GM12878 (cell line): ENCODE measurements at regions of chr2 and their contacts with region 1.

Region 1: DNA sequence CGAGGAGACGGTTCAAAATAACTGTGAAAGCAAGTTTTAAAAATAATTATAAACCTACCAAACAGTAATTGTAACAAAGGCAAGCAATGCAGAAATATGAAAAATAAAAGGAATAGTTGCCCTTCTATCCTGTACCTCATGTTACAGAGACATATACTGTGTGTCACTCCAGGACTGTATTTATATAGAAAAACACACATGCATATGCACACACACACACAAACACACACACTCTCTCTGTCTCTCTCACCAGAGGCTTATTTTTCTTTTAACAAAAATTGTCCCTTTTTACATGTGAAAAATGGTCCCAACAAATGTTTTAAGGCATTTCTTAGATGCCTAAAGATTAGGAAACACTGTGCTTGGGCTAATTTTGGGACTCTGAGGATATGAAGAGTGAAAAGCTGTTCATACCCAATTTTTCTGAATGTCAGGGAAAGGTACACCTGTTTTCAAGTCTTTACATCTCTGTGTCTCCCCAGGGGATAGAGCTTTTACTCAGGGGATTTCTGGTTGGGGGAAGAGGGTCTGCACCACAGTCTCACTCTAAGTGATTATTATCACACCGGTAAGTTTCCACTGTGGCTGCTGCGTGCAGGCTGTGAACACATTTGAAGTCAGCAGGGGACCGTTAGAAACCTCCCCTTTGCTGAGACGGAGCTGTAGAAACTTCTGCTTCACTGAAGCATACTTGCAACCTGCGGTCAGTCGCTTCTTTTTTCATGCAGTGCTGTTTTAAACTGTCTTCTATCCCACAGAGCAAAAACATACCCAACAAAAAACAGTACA is 51.4 kb upstream of the SPAG16 start:
- DNase-seq: peak; percentile 100
- ATAC-seq: peak; percentile 72
- H3K4me3 ChIP-seq: peak overlapping the region; percentile 13; the same call in 1 of the 2 replicates
- H3K27ac ChIP-seq: peak overlapping the region; percentile 98
- H3K4me1 ChIP-seq: peaks cover 56% of the 10 kb centered on the region
- H3K27me3 ChIP-seq: no peaks in the 10 kb centered on the region
- CTCF ChIP-seq: no peak
- EP300 ChIP-seq: peak; percentile 70 to 93; a peak in 3 of 4 replicates
- POLR2A ChIP-seq: peak; percentile 60; the same call in 1 of the 2 replicates
- RAD21 ChIP-seq: peak; percentile 39; the same call in 1 of the 2 replicates

Region 2: DNA sequence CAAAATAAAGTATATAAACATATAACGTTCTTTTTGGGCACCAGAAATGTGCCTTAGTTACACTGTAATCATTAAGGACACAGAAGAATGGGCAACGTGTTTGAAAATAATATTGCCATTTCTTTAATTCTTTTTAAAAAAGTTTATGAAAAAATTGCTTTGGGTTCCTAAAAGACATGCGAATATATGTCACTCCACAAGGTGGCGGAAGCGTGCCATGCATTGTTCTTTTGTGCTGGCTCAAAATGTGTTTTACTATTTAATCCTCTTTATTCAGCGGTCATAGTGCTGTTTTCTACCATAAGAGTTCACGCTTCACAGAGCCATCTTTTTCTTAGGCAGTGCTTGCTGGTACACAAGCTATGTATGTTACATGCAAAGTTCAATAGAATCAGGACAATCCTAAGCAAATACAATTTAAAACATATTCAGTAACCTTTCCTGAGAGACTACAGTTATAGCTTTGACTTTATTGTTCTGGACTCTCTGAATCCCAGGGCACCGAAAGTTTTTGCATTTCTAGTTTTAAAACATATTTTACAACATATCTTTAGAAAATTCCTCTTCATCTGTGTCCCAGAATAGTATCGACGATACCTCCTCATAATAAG is 546.5 kb before region 1 on chr2:
- CTCF ChIA-PET with region 1: no interaction called
- POLR2A ChIA-PET with region 1: no interaction called
- RAD21 ChIA-PET with region 1: no interaction called
- SMC1A ChIA-PET with region 1: no interaction called
- in situ Hi-C with region 1: no loop called
- intact Hi-C with region 1: loop called (anchors 5 kb)
- DNase-seq: peak; percentile 60
- ATAC-seq: peak; percentile 84
- H3K4me3 ChIP-seq: no peak overlapping the region
- H3K27ac ChIP-seq: no peak overlapping the region
- H3K4me1 ChIP-seq: peaks cover 4% of the 10 kb centered on the region; the same call in 1 of the 2 replicates
- H3K27me3 ChIP-seq: no peaks in the 10 kb centered on the region
- CTCF ChIP-seq: peak; percentile 78 to 90 (median 85)
- EP300 ChIP-seq: no peak
- POLR2A ChIP-seq: no peak
- RAD21 ChIP-seq: peak; percentile 99

Region 3: DNA sequence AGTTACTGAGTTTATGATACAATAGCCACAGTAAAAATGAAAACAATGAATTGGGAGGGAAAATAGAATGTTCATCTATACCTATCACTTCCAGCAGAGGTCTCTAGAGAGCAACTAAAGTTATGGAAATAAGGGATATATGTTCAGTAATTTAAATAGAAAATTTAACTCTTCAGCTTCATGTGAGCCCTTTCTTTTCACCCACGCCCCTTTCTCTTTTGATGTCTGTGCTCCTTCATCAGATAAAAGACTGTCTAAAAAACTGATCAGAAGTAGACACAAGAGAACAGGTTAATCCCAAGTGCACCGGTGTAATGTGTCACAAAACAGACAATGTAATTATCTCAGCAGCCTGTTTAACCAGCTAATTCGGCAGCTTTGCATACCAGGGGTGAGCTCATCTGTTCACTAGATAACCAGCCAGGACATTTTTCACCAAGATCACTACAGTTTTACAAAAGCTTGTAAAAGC is 455.8 kb before region 1 on chr2:
- CTCF ChIA-PET with region 1: no interaction called
- POLR2A ChIA-PET with region 1: no interaction called
- RAD21 ChIA-PET with region 1: interaction called, 9 read pairs
- SMC1A ChIA-PET with region 1: interaction called, 3 read pairs
- in situ Hi-C with region 1: no loop called
- intact Hi-C with region 1: loop called (anchors 5 kb)
- DNase-seq: peak; percentile 17
- ATAC-seq: peak; percentile 74
- H3K4me3 ChIP-seq: no peak overlapping the region
- H3K27ac ChIP-seq: no peak overlapping the region
- H3K4me1 ChIP-seq: no peaks in the 10 kb centered on the region
- H3K27me3 ChIP-seq: no peaks in the 10 kb centered on the region
- CTCF ChIP-seq: peak; percentile 47 to 63 (median 53)
- EP300 ChIP-seq: no peak
- POLR2A ChIP-seq: no peak
- RAD21 ChIP-seq: peak; percentile 69

Region 4: DNA sequence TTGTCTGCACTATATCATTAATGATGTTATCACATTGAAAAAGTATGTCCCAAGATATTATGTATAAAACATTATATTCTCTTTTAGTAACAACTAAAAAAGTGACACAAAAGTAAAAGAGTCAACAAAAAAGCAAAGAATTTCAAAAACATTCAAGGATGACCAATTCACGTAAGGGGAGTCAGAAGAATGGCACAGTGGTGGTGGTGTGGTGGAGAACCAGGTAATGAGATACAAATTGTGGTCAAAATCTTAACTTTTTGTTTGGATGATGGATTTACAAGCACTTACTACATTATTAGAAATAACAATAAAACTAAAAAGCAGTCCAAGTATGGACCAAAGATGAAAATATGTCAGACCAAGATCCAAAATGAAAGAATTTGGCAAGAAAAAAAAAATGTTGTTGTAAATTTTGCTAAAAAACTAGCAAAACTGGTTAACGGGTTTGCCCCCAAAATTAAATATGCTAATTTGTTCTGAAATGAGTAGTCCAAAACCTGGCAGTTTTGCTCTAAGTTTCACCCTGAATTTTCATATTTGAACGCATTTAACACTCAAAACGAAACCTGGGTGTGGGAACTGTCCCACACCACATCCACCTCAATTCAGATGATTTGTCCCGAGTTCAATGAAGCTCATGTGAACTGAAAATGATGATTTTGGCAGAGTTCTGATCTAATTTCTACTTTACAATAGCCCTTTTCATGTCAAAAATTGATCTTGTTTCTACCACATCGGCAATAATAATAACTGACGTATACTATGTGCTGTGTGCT is 217.3 kb before region 1 on chr2:
- CTCF ChIA-PET with region 1: interaction called, 6 read pairs
- POLR2A ChIA-PET with region 1: interaction called, 18 read pairs
- RAD21 ChIA-PET with region 1: interaction called, 72 read pairs
- SMC1A ChIA-PET with region 1: interaction called, 237 read pairs
- in situ Hi-C with region 1: loop called (anchors 5 kb)
- intact Hi-C with region 1: loop called (anchors 1 kb)
- DNase-seq: peak; percentile 98
- ATAC-seq: peak; percentile 55
- H3K4me3 ChIP-seq: peak overlapping the region; percentile 65
- H3K27ac ChIP-seq: peak overlapping the region; percentile 96
- H3K4me1 ChIP-seq: peaks cover 20% of the 10 kb centered on the region
- H3K27me3 ChIP-seq: no peaks in the 10 kb centered on the region
- CTCF ChIP-seq: no peak
- EP300 ChIP-seq: peak; percentile 92 to 93
- POLR2A ChIP-seq: no peak
- RAD21 ChIP-seq: no peak

Region 5: DNA sequence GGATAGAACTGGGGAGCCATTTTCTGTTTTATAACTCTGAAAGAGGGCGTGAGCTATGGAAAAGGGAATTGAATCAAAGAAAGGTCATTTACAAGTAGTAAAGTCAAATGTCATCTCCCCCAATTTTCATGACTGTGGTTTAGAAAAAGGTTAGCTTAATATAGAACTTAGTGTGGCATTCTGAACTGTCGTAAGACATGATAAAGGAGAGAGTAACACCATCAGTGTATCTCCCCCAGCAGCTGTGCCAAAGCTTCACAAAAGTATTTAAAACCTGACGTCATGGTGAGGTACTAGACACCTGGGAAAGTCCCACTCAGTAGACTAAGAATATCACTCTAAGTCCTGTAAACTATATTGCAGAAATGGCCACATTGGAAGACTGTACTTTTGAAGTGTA is 75.6 kb before region 1 on chr2:
- CTCF ChIA-PET with region 1: interaction called, 19 read pairs
- POLR2A ChIA-PET with region 1: interaction called, 232 read pairs
- RAD21 ChIA-PET with region 1: interaction called, 540 read pairs
- SMC1A ChIA-PET with region 1: interaction called, 467 read pairs
- in situ Hi-C with region 1: loop called (anchors 5 kb)
- intact Hi-C with region 1: loop called (anchors 1 kb)
- DNase-seq: no peak
- ATAC-seq: peak; percentile 80
- H3K4me3 ChIP-seq: no peak overlapping the region; the same call in 1 of the 2 replicates
- H3K27ac ChIP-seq: peak overlapping the region; percentile 65
- H3K4me1 ChIP-seq: peaks cover 18% of the 10 kb centered on the region
- H3K27me3 ChIP-seq: no peaks in the 10 kb centered on the region
- CTCF ChIP-seq: no peak
- EP300 ChIP-seq: peak; percentile 86 to 88; a peak in 2 of 4 replicates
- POLR2A ChIP-seq: no peak
- RAD21 ChIP-seq: peak; percentile 31; the same call in 1 of the 2 replicates

Region 6: DNA sequence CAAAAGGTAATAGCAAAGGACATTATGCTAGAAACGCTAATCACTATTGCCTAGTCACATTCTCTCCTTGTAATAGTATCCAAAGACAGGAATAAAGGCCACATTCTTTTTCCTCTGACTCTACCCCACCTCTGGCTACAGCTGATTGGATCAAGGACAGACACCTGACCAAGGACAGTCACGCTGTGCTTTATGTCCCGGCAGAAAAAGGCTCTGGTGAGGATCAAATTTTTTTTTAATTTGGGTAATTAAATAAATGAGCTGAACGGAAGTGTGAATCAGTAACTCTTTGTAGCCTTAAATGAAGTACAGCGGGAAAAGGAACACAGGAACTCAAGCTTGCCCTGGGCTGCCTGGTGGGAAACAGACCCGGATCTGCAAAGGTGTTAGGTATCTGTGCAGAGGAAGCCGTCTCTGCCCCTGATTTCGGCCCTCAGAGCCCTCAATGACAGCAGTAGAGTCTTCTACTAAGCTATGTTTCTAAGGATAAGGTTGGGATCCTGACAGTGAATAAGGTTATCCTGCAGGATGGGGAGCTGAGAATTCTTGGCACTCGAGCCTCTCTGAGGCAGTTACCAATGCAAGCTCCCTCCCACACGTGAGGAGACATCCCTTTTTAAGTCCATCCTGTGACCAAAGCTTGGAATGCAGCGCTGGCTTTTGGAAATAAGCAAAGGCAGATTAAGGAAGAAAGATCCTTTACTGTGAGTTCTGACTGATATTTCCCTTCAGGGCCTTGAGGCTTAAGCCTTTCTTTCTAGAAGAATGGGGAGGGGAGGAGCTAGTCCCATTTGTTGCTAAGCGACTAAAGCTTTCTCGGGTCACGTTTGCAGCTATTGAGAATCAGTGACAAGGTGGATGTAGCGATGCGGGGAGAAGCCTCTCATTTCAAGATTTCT is 43.6 kb before region 1 on chr2:
- CTCF ChIA-PET with region 1: no interaction called
- POLR2A ChIA-PET with region 1: interaction called, 3 read pairs
- RAD21 ChIA-PET with region 1: interaction called, 6 read pairs
- SMC1A ChIA-PET with region 1: interaction called, 21 read pairs
- in situ Hi-C with region 1: no loop called
- intact Hi-C with region 1: loop called (anchors 5 kb)
- DNase-seq: no peak
- ATAC-seq: no peak
- H3K4me3 ChIP-seq: no peak overlapping the region
- H3K27ac ChIP-seq: no peak overlapping the region
- H3K4me1 ChIP-seq: peaks cover 12% of the 10 kb centered on the region
- H3K27me3 ChIP-seq: no peaks in the 10 kb centered on the region
- CTCF ChIP-seq: no peak
- EP300 ChIP-seq: no peak
- POLR2A ChIP-seq: no peak
- RAD21 ChIP-seq: no peak

Region 7: GRCh38 chr2:214737188-214737587 is 1504.3 kb after region 1 on chr2:
- CTCF ChIA-PET with region 1: no interaction called
- POLR2A ChIA-PET with region 1: no interaction called
- RAD21 ChIA-PET with region 1: interaction called, 3 read pairs
- SMC1A ChIA-PET with region 1: no interaction called
- in situ Hi-C with region 1: loop called (anchors 25 kb)
- intact Hi-C with region 1: loop called (anchors 2 kb)
- DNase-seq: peak; percentile 92
- ATAC-seq: peak; percentile 88
- H3K4me3 ChIP-seq: no peak overlapping the region
- H3K27ac ChIP-seq: peak overlapping the region; percentile 89
- H3K4me1 ChIP-seq: peaks cover 12% of the 10 kb centered on the region
- H3K27me3 ChIP-seq: no peaks in the 10 kb centered on the region
- CTCF ChIP-seq: no peak
- EP300 ChIP-seq: peak; percentile 97 to 98; a peak in 3 of 4 replicates
- POLR2A ChIP-seq: no peak
- RAD21 ChIP-seq: no peak